CD8-positive, alpha-beta T cell (primary cell): ENCODE measurements at regions of chr2 and their contacts with region 1.

Region 1: GRCh38 chr2:224039124-224039940 is at the start of gene SERPINE2:
- DNase-seq: peak in 8 of 9 experiments; percentile 19 to 74 (median 52)
- ATAC-seq: peak; percentile 67
- H3K4me3 ChIP-seq: peak within 1 kb of the TSS; percentile 39 to 41
- H3K4me3 Mint-ChIP-seq: peak within 1 kb of the TSS; percentile 97
- H3K27ac ChIP-seq: no peak within 1 kb of the TSS
- H3K27ac Mint-ChIP-seq: peak within 1 kb of the TSS; percentile 65
- H3K4me1 ChIP-seq: peaks cover 11% of the 10 kb centered on the region
- H3K4me1 Mint-ChIP-seq: peaks cover 24% of the 10 kb centered on the region
- H3K27me3 ChIP-seq: peaks cover 0 to 2% of the 10 kb centered on the region in 2 experiments
- H3K27me3 Mint-ChIP-seq: peaks cover 42% of the 10 kb centered on the region
- CTCF ChIP-seq: no peak
- total RNA-seq, gene SERPINE2: 2.8 to 4.8 TPM

Region 2: DNA sequence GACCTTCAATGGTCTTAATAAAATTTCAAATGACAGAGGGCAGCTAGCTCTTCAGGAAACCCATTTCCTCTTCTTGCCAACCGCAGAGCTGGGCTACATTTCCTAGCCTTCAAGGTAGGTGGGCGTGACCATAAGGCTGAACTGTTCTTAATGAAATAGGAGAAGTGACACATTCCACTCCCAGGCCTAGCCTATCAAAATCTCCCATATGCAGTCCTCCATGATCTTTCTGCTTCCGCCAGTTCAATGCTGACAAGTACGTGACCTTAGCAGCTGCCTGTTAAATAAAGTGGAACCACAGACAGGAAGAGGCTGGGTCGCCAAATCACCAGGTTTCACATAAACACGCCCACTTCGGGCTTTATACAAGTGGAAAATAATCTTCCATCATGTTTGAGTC is 13.5 kb before region 1 on chr2:
- CTCF ChIA-PET with region 1: no interaction called
- POLR2A ChIA-PET with region 1: no interaction called
- intact Hi-C with region 1: loop called in 1 of 2 experiments (anchors 2 kb)
- DNase-seq: peak in 7 of 9 experiments; percentile 27 to 81 (median 59)
- ATAC-seq: peak; percentile 92
- H3K4me3 ChIP-seq: peak overlapping the region in 1 of 2 experiments; percentile 1
- H3K4me3 Mint-ChIP-seq: peak overlapping the region; percentile 44
- H3K27ac ChIP-seq: peak overlapping the region in 1 of 2 experiments; percentile 65
- H3K27ac Mint-ChIP-seq: peak overlapping the region; percentile 78
- H3K4me1 ChIP-seq: peaks cover 54% of the 10 kb centered on the region
- H3K4me1 Mint-ChIP-seq: peaks cover 60% of the 10 kb centered on the region
- H3K27me3 ChIP-seq: no peaks in the 10 kb centered on the region
- H3K27me3 Mint-ChIP-seq: no peaks in the 10 kb centered on the region
- CTCF ChIP-seq: no peak

Region 3: GRCh38 chr2:224195925-224196571 is 156.7 kb after region 1 on chr2:
- CTCF ChIA-PET with region 1: no interaction called
- POLR2A ChIA-PET with region 1: no interaction called
- intact Hi-C with region 1: no loop called
- DNase-seq: no peak
- ATAC-seq: no peak
- H3K4me3 ChIP-seq: no peak overlapping the region
- H3K4me3 Mint-ChIP-seq: no peak overlapping the region
- H3K27ac ChIP-seq: no peak overlapping the region
- H3K27ac Mint-ChIP-seq: no peak overlapping the region
- H3K4me1 ChIP-seq: no peaks in the 10 kb centered on the region
- H3K4me1 Mint-ChIP-seq: no peaks in the 10 kb centered on the region
- H3K27me3 ChIP-seq: no peaks in the 10 kb centered on the region
- H3K27me3 Mint-ChIP-seq: peaks cover 4% of the 10 kb centered on the region
- CTCF ChIP-seq: no peak